ENCODE measurements at regions of chr9 and their contacts with region 1.

Region 1: DNA sequence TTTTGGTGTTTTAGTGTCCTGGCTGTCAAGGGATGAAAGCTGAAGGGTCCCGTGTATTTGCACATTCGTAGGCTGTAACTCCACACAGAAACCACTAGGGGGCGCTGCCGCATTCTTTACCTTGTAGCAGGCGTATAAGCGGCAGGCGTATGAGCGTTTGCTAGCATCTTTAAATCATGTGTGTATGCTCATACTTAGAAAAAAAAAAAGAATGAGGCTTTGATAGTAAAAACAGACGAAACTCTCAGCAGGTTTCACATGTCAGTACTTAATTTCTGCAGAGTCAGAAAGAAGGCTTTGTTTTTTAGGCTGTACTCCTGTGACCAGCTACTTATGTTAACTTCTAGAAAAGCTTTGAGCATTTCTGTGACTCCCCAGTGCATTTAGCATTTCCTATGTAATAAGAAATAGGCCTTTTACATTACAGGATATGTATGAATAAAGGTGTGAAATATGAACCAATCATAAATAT is 218.8 kb upstream of the ADAMTSL1 start:
- DNase-seq: peak; percentile 73 to 78 (median 74)
- ATAC-seq: peak; percentile 75
- H3K4me3 ChIP-seq: no peak overlapping the region
- H3K27ac ChIP-seq: no peak overlapping the region
- H3K4me1 ChIP-seq: no peaks in the 10 kb centered on the region
- H3K27me3 ChIP-seq: no peaks in the 10 kb centered on the region
- CTCF ChIP-seq: peak; percentile 62 to 98 (median 81)
- POLR2A ChIP-seq: no peak

Region 2: DNA sequence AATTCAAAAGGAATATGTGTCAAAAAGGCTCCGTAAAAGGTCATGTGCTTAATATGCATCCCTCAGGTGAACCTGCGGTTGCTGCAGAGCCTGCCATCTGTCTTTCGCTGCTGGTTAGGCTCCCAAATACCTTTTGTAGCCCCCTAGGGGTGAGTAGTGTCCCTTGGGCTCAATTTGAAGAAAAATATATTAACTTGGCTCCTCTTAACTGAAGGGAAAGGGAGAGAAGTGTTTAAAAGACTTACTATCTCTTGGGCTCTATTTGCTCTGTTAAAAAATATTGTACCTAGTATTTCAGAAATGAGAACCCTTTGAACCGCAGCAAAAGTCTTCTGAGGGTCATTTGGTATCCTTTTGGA is 42.3 kb after region 1 on chr9:
- intact Hi-C with region 1: no loop called
- DNase-seq: no peak
- ATAC-seq: no peak
- H3K4me3 ChIP-seq: no peak overlapping the region
- H3K27ac ChIP-seq: no peak overlapping the region
- H3K4me1 ChIP-seq: no peaks in the 10 kb centered on the region
- H3K27me3 ChIP-seq: no peaks in the 10 kb centered on the region
- CTCF ChIP-seq: no peak
- POLR2A ChIP-seq: no peak

Region 3: GRCh38 chr9:18768951-18769622 is 513.9 kb after region 1 on chr9:
- intact Hi-C with region 1: no loop called
- DNase-seq: no peak
- ATAC-seq: no peak
- H3K4me3 ChIP-seq: no peak overlapping the region
- H3K27ac ChIP-seq: no peak overlapping the region
- H3K4me1 ChIP-seq: no peaks in the 10 kb centered on the region
- H3K27me3 ChIP-seq: no peaks in the 10 kb centered on the region
- CTCF ChIP-seq: no peak
- POLR2A ChIP-seq: no peak

Region 4: DNA sequence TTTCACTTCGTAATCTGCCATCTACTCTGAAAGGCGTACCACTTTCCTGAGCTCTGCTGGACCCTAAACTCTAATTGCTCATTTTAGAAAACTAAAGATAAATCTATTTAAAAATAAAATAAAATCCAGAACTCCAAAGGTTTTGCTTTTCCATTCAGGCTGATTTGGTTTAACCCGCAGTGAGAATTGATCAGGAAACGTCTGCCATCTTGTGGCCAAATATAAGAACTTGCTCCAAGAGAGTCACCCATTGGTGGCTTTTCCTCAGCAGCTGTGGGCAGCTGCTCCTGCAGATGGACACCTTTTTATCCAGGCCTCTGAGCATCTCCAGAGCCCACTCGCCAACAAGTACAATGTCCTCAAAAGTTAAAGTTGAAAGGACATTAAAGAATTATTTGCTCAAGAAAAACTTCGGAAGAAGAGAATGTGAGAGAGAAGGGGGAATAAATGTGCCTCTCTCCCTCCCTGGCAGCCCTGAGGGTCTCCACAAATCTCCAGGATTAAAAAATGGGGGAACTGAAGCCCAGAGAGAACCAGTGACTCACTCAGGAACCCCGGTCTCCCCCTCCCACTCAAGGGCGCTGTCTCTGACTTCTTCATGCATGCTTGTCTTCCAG is 773.7 kb after region 1 on chr9:
- intact Hi-C with region 1: loop called (anchors 10 kb)
- DNase-seq: peak; percentile 33 to 55 (median 50)
- ATAC-seq: peak; percentile 78
- H3K4me3 ChIP-seq: no peak overlapping the region
- H3K27ac ChIP-seq: no peak overlapping the region
- H3K4me1 ChIP-seq: no peaks in the 10 kb centered on the region
- H3K27me3 ChIP-seq: no peaks in the 10 kb centered on the region
- CTCF ChIP-seq: peak; percentile 53 to 84 (median 68)
- POLR2A ChIP-seq: no peak